ENCODE measurements at regions of chr4 and their contacts with region 1.

Region 1: DNA sequence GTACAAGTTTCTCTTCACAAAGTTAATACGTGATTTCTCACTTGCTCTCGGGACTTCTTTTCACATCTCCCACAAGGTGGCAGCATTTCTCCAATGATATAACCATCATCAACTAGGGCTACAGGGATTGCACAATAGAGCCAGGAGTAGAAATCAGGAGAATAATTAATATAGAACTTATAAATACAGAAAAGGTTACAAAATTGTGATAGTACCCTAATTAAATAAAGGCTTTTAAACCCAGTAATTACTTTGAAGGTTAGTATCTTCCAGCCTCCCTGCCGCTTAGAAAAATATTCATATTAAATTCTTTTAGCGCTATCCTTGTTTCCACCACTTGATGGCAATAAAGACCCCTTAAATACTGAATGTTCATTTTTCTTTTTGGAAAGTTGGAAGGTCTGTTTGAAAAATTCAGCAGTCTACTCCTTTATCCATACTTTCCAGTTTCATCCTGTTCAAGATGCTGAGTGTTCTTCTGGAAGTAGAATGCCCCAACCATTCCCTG is 65.8 kb downstream of the RASGEF1B start:
- DNase-seq: peak in 3 of 10 donors; percentile 44 to 64 (median 48)

Region 2: GRCh38 chr4:81245218-81246009 is 160.5 kb before region 1 on chr4:
- intact Hi-C with region 1: no loop called
- DNase-seq: no peak

Region 3: DNA sequence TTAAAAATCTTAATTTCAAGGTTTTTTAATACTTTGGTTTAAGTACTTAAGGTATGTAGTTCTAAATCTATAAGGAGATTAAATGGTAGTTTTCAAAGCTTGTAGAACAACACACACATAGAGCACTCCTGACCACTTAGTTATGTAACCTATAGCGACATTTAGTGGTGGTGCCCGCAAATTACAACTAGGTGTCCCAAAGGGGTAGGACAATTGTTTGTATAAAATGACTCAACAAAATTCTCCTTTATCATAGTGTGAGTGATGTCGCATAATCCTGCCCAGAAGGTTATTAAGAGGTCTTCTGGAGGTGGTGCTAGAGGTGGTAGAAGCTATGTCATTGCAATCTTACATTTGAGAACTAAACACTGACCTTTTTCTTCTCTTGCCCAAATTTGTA is 438.8 kb after region 1 on chr4:
- intact Hi-C with region 1: loop called (anchors 2 kb)
- DNase-seq: peak in 7 of 10 donors; percentile 36 to 82 (median 71)

Region 4: DNA sequence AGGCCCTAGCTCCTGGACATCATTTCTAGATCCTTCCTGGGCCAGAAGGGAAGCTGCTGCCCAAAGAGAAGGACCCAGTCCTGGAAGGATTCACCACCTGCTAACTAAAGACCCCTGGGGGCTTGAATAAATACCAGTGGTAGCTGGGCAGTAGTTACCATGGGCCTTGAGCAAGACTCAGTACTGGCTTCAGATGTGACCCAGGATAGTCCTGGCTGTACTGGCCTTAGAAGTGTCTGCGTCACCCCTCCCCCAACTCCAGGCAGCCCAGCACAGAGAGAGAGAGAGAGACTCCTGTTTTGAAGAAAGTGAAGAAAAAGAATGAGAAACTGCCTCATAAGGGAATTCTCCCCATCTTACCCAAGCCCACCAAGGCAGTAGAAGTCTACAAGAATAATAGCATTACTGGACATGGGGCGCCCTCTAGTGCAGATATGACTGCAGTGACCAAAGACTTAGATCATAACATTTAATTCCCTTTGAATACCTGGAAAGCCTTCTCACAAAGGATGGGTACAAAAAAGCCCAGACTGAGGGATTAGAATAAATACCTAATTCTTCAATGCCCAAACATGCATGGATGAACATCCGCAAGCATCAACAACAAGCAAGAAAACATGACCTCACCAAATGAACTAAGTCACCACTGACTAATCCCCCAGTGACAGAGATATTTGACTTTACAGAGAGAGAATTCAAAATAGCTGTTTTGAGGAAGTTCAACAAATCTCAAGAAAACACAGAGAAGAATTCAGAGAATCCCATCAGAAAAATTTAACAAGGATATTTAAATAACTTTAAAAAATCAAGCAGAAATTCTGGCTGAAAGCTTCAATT is 796.1 kb after region 1 on chr4:
- intact Hi-C with region 1: loop called (anchors 1 kb)
- DNase-seq: peak in 1 of 10 donors; percentile 28

Measured in posterior cingulate gyrus (tissue), 11 donors.